AG04449 (cell line): ENCODE measurements at regions of chr19 and their contacts with region 1.

Region 1: GRCh38 chr19:36169084-36169760 is 17.0 kb upstream of the COX7A1 start:
- DNase-seq: no peak
- H3K4me3 ChIP-seq: no peak overlapping the region
- CTCF ChIP-seq: no peak

Region 2: DNA sequence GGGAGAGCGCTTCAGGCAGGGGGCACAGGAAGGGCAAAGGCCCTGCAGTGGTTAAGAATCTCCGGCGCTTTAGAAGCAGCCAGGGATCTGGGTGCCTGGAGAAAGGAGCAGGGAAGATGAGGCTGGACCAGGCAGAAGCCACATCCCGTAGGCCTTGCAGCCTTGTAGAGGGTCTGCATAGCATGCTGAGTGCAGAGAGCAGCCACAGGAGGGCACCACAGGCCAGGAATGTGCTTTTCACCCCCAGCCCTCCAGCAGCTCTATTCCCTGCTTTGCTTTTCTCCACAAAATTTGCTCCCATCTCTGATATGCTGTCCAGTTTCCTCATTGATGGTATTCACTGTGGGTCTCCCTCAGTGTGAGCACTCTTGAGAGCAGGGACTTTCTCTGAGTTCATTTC is 108.8 kb before region 1 on chr19:
- CTCF ChIA-PET with region 1: interaction called, 69 read pairs
- POLR2A ChIA-PET with region 1: no interaction called
- DNase-seq: no peak
- H3K4me3 ChIP-seq: no peak overlapping the region
- CTCF ChIP-seq: peak; percentile 89

Region 3: DNA sequence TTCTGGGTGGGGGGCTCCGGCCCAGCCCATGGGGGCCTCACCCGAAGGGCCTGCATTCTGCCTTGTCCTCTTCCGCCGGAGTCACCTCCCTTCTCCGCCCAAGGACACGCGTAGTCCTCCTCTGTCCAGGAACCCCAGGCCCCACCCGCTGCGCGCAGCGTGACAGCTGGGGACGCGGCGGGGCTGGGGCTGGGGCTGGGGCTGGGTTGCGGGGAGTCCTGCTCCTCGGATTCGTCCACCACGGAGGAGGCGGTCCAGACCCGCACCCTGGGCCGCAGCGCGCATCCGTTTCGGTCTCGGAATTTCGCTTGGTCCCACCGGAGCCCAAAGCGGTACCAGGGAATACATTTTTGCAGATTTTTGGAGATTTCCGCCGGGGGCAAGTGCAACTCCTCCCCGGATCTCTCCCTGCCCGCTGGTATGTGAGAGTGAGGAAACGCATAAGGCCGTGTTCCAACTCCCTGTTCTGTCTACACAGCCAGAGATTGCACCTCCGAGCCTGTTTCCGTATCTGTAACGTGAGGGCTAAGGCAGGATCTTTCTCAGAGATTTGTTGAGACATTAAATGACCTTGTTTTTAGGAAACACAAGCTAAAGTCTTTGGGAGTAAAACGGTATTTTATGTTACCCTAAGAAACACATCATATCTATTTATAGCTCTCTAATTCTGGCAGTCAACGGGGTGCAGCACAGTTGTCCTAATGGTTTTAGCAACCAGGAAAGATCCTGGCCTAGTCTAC is 16.7 kb before region 1 on chr19 and contains the start of gene COX7A1:
- CTCF ChIA-PET with region 1: interaction called, 10 read pairs
- POLR2A ChIA-PET with region 1: interaction called, 3 read pairs
- DNase-seq: no peak
- H3K4me3 ChIP-seq: peak within 1 kb of the TSS; percentile 27
- CTCF ChIP-seq: no peak

Region 4: DNA sequence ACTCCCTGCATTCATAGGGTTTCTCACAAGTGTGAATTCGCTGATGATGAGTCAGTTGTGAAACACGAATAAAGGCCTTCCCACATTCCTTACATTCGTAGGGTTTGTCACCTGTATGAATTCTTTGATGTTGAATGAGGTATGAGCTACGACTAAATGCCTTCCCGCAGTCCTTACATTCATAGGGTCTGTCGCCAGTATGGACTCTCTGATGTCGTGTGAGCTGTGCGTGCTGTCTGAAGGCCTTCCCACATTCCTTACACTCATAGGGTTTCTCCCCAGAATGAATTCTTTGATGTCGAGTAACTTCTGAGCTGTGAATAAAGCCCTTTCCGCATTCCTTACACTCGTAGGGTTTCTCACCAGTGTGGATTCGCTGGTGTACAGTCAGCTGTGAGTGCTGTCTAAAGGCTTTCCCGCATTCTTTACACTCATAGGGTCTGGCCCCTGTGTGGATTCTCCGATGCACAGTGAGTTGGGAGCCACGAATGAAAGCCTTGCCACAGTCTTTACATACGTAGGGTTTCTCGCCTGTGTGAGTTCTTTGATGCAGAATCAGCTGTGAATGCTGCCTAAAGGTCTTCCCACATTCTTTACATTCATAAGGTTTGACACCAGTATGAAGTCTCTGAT is 13.5 kb after region 1 on chr19:
- CTCF ChIA-PET with region 1: interaction called, 46 read pairs
- POLR2A ChIA-PET with region 1: no interaction called
- DNase-seq: peak; percentile 62
- H3K4me3 ChIP-seq: no peak overlapping the region
- CTCF ChIP-seq: no peak